ENCODE measurements at regions of chr22 and their contacts with region 1.

Region 1: GRCh38 chr22:50190182-50190940 is 4.6 kb downstream of the TRABD start:
- DNase-seq: peak; percentile 85
- ATAC-seq: peak; percentile 56
- H3K4me3 Mint-ChIP-seq: peak overlapping the region; percentile 91
- H3K27ac Mint-ChIP-seq: peak overlapping the region; percentile 94
- H3K4me1 Mint-ChIP-seq: peaks cover 54% of the 10 kb centered on the region
- H3K27me3 Mint-ChIP-seq: no peaks in the 10 kb centered on the region

Region 2: DNA sequence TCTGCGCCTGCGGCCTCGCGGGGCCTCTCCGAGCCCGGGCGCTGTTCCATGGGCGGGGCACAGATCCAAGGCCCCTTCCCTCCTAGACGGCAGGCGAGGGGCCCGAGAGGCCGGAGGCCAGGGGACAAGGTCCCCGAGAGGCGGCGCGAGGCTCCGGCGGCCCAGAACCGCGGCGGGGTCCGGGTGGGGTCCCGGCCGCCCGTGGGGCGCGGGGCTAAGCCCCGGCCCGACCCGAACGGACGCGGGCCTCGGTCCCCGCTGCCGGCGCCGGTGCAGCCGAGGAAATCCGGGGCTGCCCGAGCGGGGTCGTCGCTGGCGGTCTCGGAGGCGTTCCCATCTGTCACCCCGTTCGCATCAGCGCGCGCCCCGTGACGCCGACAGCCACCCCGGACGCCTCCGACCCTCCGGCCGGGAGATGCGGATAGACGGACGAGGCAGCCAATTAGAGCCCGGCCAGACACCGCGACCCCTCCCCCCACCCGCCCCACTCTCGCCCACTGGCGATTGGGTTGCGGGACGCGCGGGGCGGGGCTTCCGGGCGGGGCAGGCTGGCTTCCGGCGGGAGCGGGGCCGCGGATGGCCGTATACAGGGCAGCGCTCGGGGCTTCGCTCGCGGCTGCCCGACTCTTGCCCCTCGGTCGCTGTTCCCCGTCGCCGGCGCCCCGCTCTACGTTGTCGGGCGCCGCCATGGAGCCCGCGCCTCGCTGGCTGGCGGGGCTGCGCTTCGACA is 10.3 kb after region 1 on chr22 and contains the start of gene SELENOO:
- CTCF ChIA-PET with region 1: interaction called, 10 read pairs
- POLR2A ChIA-PET with region 1: interaction called, 17 read pairs
- DNase-seq: peak; percentile 94
- ATAC-seq: peak; percentile 91
- H3K4me3 Mint-ChIP-seq: peak within 1 kb of the TSS; percentile 82
- H3K27ac Mint-ChIP-seq: peak within 1 kb of the TSS; percentile 77
- H3K4me1 Mint-ChIP-seq: peaks cover 25% of the 10 kb centered on the region
- H3K27me3 Mint-ChIP-seq: no peaks in the 10 kb centered on the region
- total RNA-seq, gene SELENOO: 23.6 to 24.4 TPM

Region 3: GRCh38 chr22:50209893-50210292 is 19.5 kb after region 1 on chr22:
- CTCF ChIA-PET with region 1: interaction called, 10 read pairs
- POLR2A ChIA-PET with region 1: interaction called, 9 read pairs
- DNase-seq: peak; percentile 80
- ATAC-seq: peak; percentile 76
- H3K4me3 Mint-ChIP-seq: no peak overlapping the region
- H3K27ac Mint-ChIP-seq: peak overlapping the region; percentile 53
- H3K4me1 Mint-ChIP-seq: peaks cover 14% of the 10 kb centered on the region
- H3K27me3 Mint-ChIP-seq: no peaks in the 10 kb centered on the region

Region 4: DNA sequence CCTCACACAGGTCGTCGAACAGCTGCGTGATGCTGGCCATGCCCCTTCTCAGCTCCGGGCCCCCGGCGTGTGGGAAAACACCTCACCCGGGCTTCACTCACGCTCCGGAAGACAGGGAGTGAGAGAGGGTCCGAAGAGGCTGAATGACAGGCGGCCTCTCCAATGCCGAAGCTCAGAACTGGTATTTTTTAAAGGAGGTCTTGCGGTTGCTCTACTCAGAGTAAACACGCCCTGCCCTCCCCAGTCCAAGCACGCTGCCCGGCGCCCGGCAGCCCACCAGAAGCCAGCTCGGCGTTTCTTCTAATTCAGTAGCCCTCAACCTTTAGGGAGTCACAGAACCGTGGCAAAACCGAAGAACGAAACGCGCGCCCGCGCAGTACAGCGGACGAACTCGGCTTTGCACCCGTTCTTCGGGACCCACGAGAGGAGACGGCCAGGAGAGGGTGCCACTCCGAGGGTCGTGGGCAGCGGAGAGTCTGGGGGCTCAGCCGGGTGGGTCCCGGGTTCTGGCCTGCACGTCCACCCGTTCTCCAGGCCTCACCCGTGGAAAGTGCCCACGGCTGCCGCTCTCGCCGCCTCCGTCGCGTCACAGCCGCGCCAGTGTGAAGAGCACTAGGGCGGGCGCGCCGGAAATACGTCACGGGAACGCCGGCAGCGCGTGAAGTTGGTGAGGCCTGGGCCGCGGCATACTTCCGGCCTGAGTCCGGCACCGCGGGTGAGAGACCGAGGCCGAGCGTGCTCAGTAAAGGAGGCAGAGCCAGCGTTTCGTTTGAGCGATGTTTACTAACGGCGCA is 54.3 kb after region 1 on chr22 and contains the start of gene TUBGCP6:
- CTCF ChIA-PET with region 1: interaction called, 10 read pairs
- POLR2A ChIA-PET with region 1: interaction called, 14 read pairs
- DNase-seq: peak; percentile 95
- ATAC-seq: peak; percentile 81
- H3K4me3 Mint-ChIP-seq: peak within 1 kb of the TSS; percentile 95
- H3K27ac Mint-ChIP-seq: peak within 1 kb of the TSS; percentile 99
- H3K4me1 Mint-ChIP-seq: peaks cover 41% of the 10 kb centered on the region
- H3K27me3 Mint-ChIP-seq: no peaks in the 10 kb centered on the region
- total RNA-seq, gene TUBGCP6: 53.2 to 58.1 TPM

Measured in activated CD8-positive, alpha-beta T cell treated with anti-CD3 and anti-CD28 coated beads, Interleukin-2, amount 10 ng/mL, durations not matched to agents 7 days and 5 days (primary cell).